Calu3 (cell line): ENCODE measurements at regions of chr18 and their contacts with region 1.

Region 1: GRCh38 chr18:22977847-22978701 is 44.9 kb downstream of the RBBP8 start:
- DNase-seq: peak; percentile 30
- H3K4me3 Mint-ChIP-seq: peak overlapping the region; percentile 45
- H3K27ac Mint-ChIP-seq: peak overlapping the region; percentile 89
- H3K4me1 Mint-ChIP-seq: peaks cover 60% of the 10 kb centered on the region
- H3K27me3 Mint-ChIP-seq: no peaks in the 10 kb centered on the region
- CTCF ChIP-seq: no peak

Region 2: GRCh38 chr18:22813648-22814328 is 164.3 kb before region 1 on chr18:
- CTCF ChIA-PET with region 1: interaction called, 21 read pairs
- intact Hi-C with region 1: loop called (anchors 1 kb)
- DNase-seq: peak; percentile 41
- H3K4me3 Mint-ChIP-seq: no peak overlapping the region
- H3K27ac Mint-ChIP-seq: no peak overlapping the region
- H3K4me1 Mint-ChIP-seq: peaks cover 7% of the 10 kb centered on the region
- H3K27me3 Mint-ChIP-seq: peaks cover 13% of the 10 kb centered on the region
- CTCF ChIP-seq: peak; percentile 52

Region 3: GRCh38 chr18:23071285-23071684 is 93.2 kb after region 1 on chr18:
- CTCF ChIA-PET with region 1: no interaction called
- intact Hi-C with region 1: no loop called
- DNase-seq: no peak
- H3K4me3 Mint-ChIP-seq: no peak overlapping the region
- H3K27ac Mint-ChIP-seq: no peak overlapping the region
- H3K4me1 Mint-ChIP-seq: peaks cover 8% of the 10 kb centered on the region
- H3K27me3 Mint-ChIP-seq: no peaks in the 10 kb centered on the region
- CTCF ChIP-seq: no peak

Region 4: DNA sequence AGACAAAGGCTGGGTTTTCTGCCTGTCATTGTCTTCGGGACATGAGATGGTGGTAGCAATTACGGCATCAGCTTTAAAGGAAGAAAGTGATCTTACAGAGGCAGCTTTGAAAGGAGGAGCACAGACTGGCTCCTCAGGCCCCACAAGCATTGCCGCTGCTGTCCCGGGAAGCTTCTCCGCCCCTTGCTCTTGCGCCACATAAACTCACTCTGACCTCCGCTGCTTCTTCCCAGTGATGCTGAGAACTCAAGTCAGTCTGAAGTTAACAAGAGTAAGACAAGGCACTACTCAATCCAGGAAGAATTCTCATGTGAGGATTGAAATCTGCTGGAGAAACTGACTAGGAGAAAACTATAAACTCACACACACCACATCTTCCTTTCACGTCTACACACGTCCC is 362.6 kb after region 1 on chr18:
- CTCF ChIA-PET with region 1: no interaction called
- intact Hi-C with region 1: no loop called
- DNase-seq: no peak
- H3K4me3 Mint-ChIP-seq: no peak overlapping the region
- H3K27ac Mint-ChIP-seq: no peak overlapping the region
- H3K4me1 Mint-ChIP-seq: no peaks in the 10 kb centered on the region
- H3K27me3 Mint-ChIP-seq: no peaks in the 10 kb centered on the region
- CTCF ChIP-seq: no peak